ENCODE measurements at regions of chr22 and their contacts with region 1.

Region 1: DNA sequence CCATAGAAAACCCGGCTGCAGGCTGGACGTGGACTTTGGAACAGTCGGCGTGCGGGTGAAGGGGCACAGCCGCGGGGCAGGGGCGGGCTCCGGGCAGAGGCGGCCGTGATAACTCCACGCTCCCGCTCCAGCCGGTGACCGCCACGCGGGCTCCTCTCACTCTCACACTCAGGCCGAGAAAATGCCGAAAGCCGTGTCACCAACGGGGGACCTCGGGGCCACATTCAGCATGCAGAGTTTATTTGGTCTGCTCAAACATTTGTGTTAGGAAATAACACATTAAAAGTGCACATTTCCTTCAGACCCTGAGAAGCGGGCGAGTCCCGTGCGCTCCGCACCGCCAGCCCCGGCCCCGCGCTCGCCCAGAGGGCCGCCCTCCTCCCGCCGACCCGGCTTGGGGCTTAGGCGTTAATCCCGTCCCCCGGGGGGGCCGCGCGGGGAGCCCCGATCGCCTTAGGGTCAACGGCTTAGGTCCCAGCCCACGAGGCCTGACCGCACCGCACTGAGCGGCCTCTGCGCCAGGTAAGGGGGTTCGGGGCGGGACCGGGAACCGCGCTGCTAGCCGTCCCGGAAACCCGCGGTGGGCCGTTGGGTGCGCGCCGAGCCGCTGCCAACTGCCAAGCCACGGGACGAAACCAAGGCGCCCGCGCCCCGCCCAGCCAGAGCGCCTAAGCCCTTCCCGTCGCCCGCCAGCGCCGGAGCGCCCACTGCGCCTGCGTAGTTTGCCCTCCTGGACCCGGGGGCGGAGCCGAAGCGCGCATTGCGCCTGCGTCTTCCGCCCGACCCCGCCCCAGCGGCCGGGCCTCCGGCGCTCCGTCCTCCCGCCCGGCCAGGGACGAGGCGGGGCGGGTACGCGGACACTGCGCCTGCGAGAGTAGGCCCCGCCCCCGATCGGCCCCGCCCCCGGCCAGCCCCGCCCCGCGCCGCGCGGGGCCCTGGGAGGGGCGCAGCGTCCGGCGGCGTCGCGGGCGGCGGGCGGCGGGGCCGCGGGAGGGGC is at the start of gene ZBED4:
- DNase-seq: peak; percentile 84 to 98
- H3K4me3 ChIP-seq: peak within 1 kb of the TSS; percentile 77 to 87
- H3K27ac ChIP-seq: peak within 1 kb of the TSS; percentile 79 to 84
- H3K4me1 ChIP-seq: peaks cover 9 to 30% of the 10 kb centered on the region in 2 donors
- H3K27me3 ChIP-seq: peaks cover 17% of the 10 kb centered on the region
- CTCF ChIP-seq: no peak
- total RNA-seq, gene ZBED4: 10.1 TPM

Region 2: GRCh38 chr22:49827853-49828598 is 25.2 kb before region 1 on chr22 and contains the start of gene BRD1:
- intact Hi-C with region 1: loop called (anchors 1 kb)
- DNase-seq: no peak
- H3K4me3 ChIP-seq: peak within 1 kb of the TSS; percentile 91 to 93
- H3K27ac ChIP-seq: peak within 1 kb of the TSS; percentile 82 to 86
- H3K4me1 ChIP-seq: peaks cover 9 to 23% of the 10 kb centered on the region in 2 donors
- H3K27me3 ChIP-seq: no peaks in the 10 kb centered on the region
- CTCF ChIP-seq: no peak
- total RNA-seq, gene BRD1: 32.5 TPM

Region 3: GRCh38 chr22:49917974-49918910 is 65.0 kb after region 1 on chr22 and contains the starts of genes ALG12 and CRELD2:
- intact Hi-C with region 1: loop called (anchors 1 kb)
- DNase-seq: peak; percentile 94 to 99
- H3K4me3 ChIP-seq: peak within 1 kb of the TSS; percentile 76 to 90
- H3K27ac ChIP-seq: peak within 1 kb of the TSS; percentile 95
- H3K4me1 ChIP-seq: peaks cover 0 to 12% of the 10 kb centered on the region in 2 donors
- H3K27me3 ChIP-seq: no peaks in the 10 kb centered on the region
- CTCF ChIP-seq: no peak
- total RNA-seq, gene ALG12: 6.9 TPM
- total RNA-seq, gene CRELD2: 61.8 TPM

Region 4: GRCh38 chr22:49960159-49961004 is 107.2 kb after region 1 on chr22 and contains the start of gene PIM3:
- intact Hi-C with region 1: loop called (anchors 2 kb)
- DNase-seq: peak; percentile 79 to 96
- H3K4me3 ChIP-seq: peak within 1 kb of the TSS; percentile 85 to 89
- H3K27ac ChIP-seq: peak within 1 kb of the TSS; percentile 88 to 96
- H3K4me1 ChIP-seq: peaks cover 0 to 18% of the 10 kb centered on the region in 2 donors
- H3K27me3 ChIP-seq: no peaks in the 10 kb centered on the region
- CTCF ChIP-seq: peak in 1 of 3 experiments; percentile 33
- total RNA-seq, gene PIM3: 269 TPM

Region 5: GRCh38 chr22:50250555-50251476 is 397.6 kb after region 1 on chr22 and contains the start of gene HDAC10:
- intact Hi-C with region 1: no loop called
- DNase-seq: peak in 1 of 2 donors; percentile 87
- H3K4me3 ChIP-seq: peak within 1 kb of the TSS; percentile 57 to 82
- H3K27ac ChIP-seq: peak within 1 kb of the TSS; percentile 66 to 71
- H3K4me1 ChIP-seq: peaks cover 11 to 22% of the 10 kb centered on the region in 2 donors
- H3K27me3 ChIP-seq: no peaks in the 10 kb centered on the region
- CTCF ChIP-seq: no peak
- total RNA-seq, gene HDAC10: 73.2 TPM

Region 6: GRCh38 chr22:50627642-50628542 is 774.7 kb after region 1 on chr22 and contains the start of gene ARSA:
- intact Hi-C with region 1: loop called (anchors 5 kb)
- DNase-seq: peak; percentile 27 to 86
- H3K4me3 ChIP-seq: peak within 1 kb of the TSS; percentile 63 to 67
- H3K27ac ChIP-seq: peak within 1 kb of the TSS; percentile 46 to 84
- H3K4me1 ChIP-seq: peaks cover 4 to 12% of the 10 kb centered on the region in 2 donors
- H3K27me3 ChIP-seq: no peaks in the 10 kb centered on the region
- CTCF ChIP-seq: peak; percentile 1 to 47 (median 18)
- total RNA-seq, gene ARSA: 111 TPM